Endothelial cell of umbilical vein (primary cell): ENCODE measurements at regions of chr14 and their contacts with region 1.

Region 1: DNA sequence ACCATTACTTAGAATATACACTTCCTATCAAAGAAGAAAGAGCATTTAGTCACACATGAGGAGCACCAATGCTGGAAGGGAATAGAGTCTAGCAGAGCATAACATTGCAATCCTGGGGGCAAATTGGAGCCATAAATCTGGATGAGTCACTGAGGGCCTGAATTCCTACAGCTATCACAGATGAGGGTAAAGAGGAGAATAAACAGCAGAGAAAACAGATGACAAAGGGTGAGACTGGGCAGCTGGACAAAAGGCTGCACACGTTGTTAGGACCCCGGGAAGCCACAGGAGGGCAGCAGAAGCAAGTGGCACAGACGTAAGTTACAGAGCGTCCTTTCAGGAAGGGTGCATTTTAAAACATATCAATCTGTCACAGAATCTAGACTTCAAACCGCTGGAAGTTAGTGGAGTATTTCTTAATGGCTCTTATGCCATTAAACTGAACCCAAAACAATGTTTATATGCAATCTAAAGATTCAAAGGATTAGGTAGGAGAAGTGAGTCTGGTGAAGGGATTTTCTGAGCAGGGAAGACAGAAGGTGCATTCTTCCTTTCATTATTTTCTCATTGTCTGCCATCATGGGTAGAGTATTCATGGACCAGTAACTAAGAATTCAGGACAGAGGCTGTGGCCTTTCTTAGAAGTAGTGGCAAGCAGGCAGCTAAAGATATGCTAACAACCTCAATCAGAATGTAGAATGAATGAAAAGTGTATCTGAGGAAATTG is 159.8 kb upstream of the DAAM1 start:
- DNase-seq: peak; percentile 66
- H3K4me3 ChIP-seq: no peak overlapping the region
- H3K27ac ChIP-seq: no peak overlapping the region
- H3K4me1 ChIP-seq: no peaks in the 10 kb centered on the region
- H3K27me3 ChIP-seq: peaks cover 5 to 8% of the 10 kb centered on the region in 2 experiments
- CTCF ChIP-seq: peak; percentile 82 to 87
- POLR2A ChIP-seq: no peak

Region 2: DNA sequence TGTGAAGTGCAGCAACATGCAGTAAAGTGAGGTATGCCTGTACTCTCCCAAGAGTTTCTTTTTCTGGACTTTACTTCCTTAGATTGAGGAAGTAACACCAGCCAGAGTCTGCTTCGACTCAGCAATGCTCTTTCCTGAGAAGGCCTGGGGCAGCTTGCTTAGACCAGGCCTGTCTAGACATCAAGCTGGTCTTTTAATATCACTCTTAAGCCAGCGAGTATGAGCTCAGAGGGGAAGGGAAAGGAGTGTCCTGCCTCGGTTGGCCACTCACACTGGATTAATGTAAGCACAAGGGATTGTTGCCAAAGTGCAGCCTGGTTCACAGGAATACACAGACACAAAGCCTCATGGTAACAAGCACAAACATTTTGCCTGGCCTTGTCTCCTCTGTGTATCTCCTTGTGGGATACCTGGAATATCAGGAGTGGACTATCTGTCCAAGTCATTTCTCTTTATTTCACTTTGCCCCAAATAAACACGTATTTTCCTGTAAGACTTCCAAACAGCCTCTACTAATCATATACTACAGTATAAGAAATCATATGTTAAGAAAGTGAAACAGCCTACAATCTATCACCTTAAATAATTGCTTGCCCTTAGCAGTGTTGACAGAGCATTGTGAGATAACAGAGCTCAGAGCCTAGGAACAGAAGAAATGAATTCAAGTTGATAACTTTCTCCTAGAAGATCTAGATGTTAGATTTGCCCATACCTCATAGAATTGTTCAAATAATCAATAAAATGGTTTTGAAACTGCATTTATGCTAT is 38.7 kb after region 1 on chr14:
- CTCF ChIA-PET with region 1: no interaction called
- POLR2A ChIA-PET with region 1: no interaction called
- dilution Hi-C with region 1: no loop called
- intact Hi-C with region 1: no loop called
- DNase-seq: no peak
- H3K4me3 ChIP-seq: no peak overlapping the region
- H3K27ac ChIP-seq: no peak overlapping the region
- H3K4me1 ChIP-seq: no peaks in the 10 kb centered on the region
- H3K27me3 ChIP-seq: peaks cover 0 to 16% of the 10 kb centered on the region in 2 experiments
- CTCF ChIP-seq: no peak
- POLR2A ChIP-seq: no peak

Region 3: GRCh38 chr14:59120921-59121320 is 92.3 kb after region 1 on chr14:
- CTCF ChIA-PET with region 1: interaction called, 3 read pairs
- POLR2A ChIA-PET with region 1: no interaction called
- dilution Hi-C with region 1: no loop called
- intact Hi-C with region 1: loop called (anchors 1 kb)
- DNase-seq: no peak
- H3K4me3 ChIP-seq: no peak overlapping the region
- H3K27ac ChIP-seq: no peak overlapping the region
- H3K4me1 ChIP-seq: no peaks in the 10 kb centered on the region
- H3K27me3 ChIP-seq: peaks cover 9 to 12% of the 10 kb centered on the region in 2 experiments
- CTCF ChIP-seq: no peak
- POLR2A ChIP-seq: no peak

Region 4: DNA sequence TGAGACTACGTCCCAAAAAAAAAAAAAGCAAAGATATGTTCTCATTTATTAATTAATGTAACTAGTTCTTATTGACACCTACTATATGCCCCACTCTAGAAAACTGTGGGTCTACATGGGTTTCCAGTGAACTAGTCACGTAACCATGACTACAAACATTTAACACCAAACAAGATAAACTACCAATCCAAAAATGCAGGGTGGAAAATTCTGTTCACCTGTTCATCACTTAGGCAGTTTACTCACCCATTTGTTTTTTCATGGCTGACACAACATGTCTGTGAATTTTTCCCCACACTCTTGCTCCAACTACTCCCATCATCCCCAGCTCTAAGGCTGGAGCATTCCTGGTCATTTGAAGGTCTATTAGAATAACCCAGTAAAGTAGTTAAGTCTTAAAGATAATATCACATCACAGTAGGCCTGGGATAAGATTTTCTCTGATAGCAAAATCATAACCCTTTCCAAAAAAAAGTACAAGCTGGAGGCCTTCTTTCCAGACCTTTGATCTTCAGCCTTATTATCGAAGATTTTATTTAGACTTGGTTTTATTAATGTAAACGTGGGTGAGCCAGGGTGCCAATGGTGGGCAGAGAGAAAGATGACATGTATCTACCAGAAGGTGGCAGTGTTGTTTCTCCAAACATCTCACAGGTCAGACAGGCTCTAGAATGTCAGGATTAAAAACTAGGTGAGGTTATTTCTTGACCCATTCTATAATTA is 98.2 kb after region 1 on chr14:
- CTCF ChIA-PET with region 1: interaction called, 3 read pairs
- POLR2A ChIA-PET with region 1: no interaction called
- dilution Hi-C with region 1: no loop called
- intact Hi-C with region 1: loop called (anchors 1 kb)
- DNase-seq: peak; percentile 64
- H3K4me3 ChIP-seq: no peak overlapping the region
- H3K27ac ChIP-seq: no peak overlapping the region
- H3K4me1 ChIP-seq: no peaks in the 10 kb centered on the region
- H3K27me3 ChIP-seq: peaks cover 5 to 6% of the 10 kb centered on the region in 2 experiments
- CTCF ChIP-seq: peak; percentile 58 to 60
- POLR2A ChIP-seq: no peak

Region 5: GRCh38 chr14:59576332-59577294 is 548.0 kb after region 1 on chr14 and contains the start of gene CCDC175:
- CTCF ChIA-PET with region 1: interaction called, 15 read pairs
- POLR2A ChIA-PET with region 1: no interaction called
- dilution Hi-C with region 1: no loop called
- intact Hi-C with region 1: loop called (anchors 1 kb)
- DNase-seq: peak; percentile 63
- H3K4me3 ChIP-seq: peak within 1 kb of the TSS in 2 of 3 experiments; percentile 18 to 38
- H3K27ac ChIP-seq: no peak within 1 kb of the TSS
- H3K4me1 ChIP-seq: no peaks in the 10 kb centered on the region
- H3K27me3 ChIP-seq: peaks cover 0 to 13% of the 10 kb centered on the region in 2 experiments
- CTCF ChIP-seq: peak; percentile 81 to 84
- POLR2A ChIP-seq: no peak
- total RNA-seq, gene CCDC175: not detected in 2 replicates

Region 6: GRCh38 chr14:59688224-59689170 is 659.9 kb after region 1 on chr14:
- CTCF ChIA-PET with region 1: interaction called, 4 read pairs
- POLR2A ChIA-PET with region 1: no interaction called
- dilution Hi-C with region 1: no loop called
- intact Hi-C with region 1: loop called (anchors 2 kb)
- DNase-seq: peak; percentile 44
- H3K4me3 ChIP-seq: no peak overlapping the region
- H3K27ac ChIP-seq: no peak overlapping the region
- H3K4me1 ChIP-seq: no peaks in the 10 kb centered on the region
- H3K27me3 ChIP-seq: no peaks in the 10 kb centered on the region
- CTCF ChIP-seq: peak; percentile 62 to 71
- POLR2A ChIP-seq: no peak